Prostate gland (tissue), 2 donors: ENCODE measurements at regions of chr5 and their contacts with region 1.

Region 1: DNA sequence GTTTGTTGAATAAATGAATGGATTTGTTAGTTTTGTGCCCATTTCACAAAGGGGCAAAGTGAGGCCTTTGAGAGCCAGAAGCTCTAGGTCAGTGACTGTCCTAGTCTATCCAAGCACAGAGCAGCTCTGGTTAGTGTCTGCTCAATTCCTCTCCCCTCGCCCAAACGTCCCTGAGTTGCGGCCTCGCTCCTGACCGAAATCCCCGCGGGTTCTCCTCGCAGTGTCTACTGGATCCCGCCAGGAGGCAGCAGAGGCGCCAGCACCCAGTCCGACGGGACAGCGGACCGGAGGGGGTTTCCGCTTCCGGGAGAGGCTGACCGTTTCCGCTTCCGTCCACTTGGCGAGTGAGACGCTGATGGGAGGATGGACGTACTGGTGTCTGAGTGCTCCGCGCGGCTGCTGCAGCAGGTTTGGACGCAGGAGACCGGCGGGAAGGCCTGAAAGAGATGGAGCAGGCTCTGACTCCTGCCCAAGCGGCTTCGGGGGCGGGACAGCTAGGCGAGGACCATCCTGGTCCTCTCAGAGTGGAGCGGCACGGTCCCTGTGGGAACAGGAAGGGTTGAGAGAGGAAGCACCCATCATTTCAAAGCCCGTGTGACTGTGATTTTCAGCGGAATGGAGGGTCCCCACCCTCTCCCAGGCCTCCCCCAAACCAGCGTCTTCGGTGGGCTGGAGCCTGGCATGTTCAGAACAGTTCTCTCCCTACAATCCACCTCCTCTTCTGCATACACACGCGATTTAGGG is at the start of gene RARS1:
- DNase-seq: peak; percentile 90
- H3K4me3 ChIP-seq: peak within 1 kb of the TSS; percentile 67 to 76
- H3K27ac ChIP-seq: peak within 1 kb of the TSS; percentile 64 to 66
- H3K4me1 ChIP-seq: no peaks in the 10 kb centered on the region
- H3K27me3 ChIP-seq: no peaks in the 10 kb centered on the region
- CTCF ChIP-seq: peak; percentile 80 to 97 (median 95)
- POLR2A ChIP-seq: peak; percentile 59
- total RNA-seq, gene RARS1: 71.6 to 86.6 TPM

Region 2: GRCh38 chr5:168568738-168569137 is 82.4 kb after region 1 on chr5:
- intact Hi-C with region 1: no loop called
- DNase-seq: no peak
- H3K4me3 ChIP-seq: no peak overlapping the region
- H3K27ac ChIP-seq: no peak overlapping the region
- H3K4me1 ChIP-seq: no peaks in the 10 kb centered on the region
- H3K27me3 ChIP-seq: no peaks in the 10 kb centered on the region
- CTCF ChIP-seq: no peak
- POLR2A ChIP-seq: no peak

Region 3: GRCh38 chr5:168579488-168580226 is 93.3 kb after region 1 on chr5:
- intact Hi-C with region 1: loop called (anchors 5 kb)
- DNase-seq: peak; percentile 99
- H3K4me3 ChIP-seq: peak overlapping the region; percentile 87 to 94
- H3K27ac ChIP-seq: peak overlapping the region; percentile 94 to 98
- H3K4me1 ChIP-seq: no peaks in the 10 kb centered on the region
- H3K27me3 ChIP-seq: no peaks in the 10 kb centered on the region
- CTCF ChIP-seq: no peak
- POLR2A ChIP-seq: peak; percentile 84